AG04449 (cell line): ENCODE measurements at regions of chr16 and their contacts with region 1.

Region 1: GRCh38 chr16:22077700-22078313 is 14.5 kb upstream of the VWA3A start:
- DNase-seq: no peak
- H3K4me3 ChIP-seq: no peak overlapping the region
- CTCF ChIP-seq: peak; percentile 72

Region 2: GRCh38 chr16:20806168-20807050 is 1271.4 kb before region 1 on chr16 and contains the starts of genes ERI2 and REXO5:
- CTCF ChIA-PET with region 1: no interaction called
- POLR2A ChIA-PET with region 1: no interaction called
- DNase-seq: peak; percentile 58
- H3K4me3 ChIP-seq: peak within 1 kb of the TSS; percentile 85
- CTCF ChIP-seq: peak; percentile 70

Region 3: GRCh38 chr16:21952793-21953540 is 124.8 kb before region 1 on chr16 and contains the start of gene UQCRC2:
- CTCF ChIA-PET with region 1: interaction called, 19 read pairs
- POLR2A ChIA-PET with region 1: no interaction called
- DNase-seq: peak; percentile 62
- H3K4me3 ChIP-seq: peak within 1 kb of the TSS; percentile 85
- CTCF ChIP-seq: no peak

Region 4: DNA sequence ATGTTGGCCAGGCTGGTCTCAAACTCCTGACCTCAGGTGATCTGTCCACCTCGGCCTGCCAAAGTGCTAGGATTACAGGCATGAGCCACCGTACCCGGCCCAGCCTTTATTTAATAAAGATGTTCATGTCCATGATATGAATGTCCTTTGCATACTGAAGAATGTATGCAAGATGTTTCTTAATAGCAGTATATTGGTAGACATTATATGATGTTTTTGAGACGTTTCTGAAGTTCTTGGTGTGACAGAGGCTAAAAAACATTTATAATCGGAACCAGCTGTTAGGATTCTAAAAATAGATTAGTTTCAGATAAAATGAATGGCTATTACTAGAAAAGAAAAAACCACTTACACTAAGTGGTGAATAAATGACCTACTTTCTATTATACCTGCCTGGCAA is 88.7 kb before region 1 on chr16:
- CTCF ChIA-PET with region 1: interaction called, 64 read pairs
- POLR2A ChIA-PET with region 1: no interaction called
- DNase-seq: peak; percentile 16
- H3K4me3 ChIP-seq: no peak overlapping the region
- CTCF ChIP-seq: no peak

Region 5: DNA sequence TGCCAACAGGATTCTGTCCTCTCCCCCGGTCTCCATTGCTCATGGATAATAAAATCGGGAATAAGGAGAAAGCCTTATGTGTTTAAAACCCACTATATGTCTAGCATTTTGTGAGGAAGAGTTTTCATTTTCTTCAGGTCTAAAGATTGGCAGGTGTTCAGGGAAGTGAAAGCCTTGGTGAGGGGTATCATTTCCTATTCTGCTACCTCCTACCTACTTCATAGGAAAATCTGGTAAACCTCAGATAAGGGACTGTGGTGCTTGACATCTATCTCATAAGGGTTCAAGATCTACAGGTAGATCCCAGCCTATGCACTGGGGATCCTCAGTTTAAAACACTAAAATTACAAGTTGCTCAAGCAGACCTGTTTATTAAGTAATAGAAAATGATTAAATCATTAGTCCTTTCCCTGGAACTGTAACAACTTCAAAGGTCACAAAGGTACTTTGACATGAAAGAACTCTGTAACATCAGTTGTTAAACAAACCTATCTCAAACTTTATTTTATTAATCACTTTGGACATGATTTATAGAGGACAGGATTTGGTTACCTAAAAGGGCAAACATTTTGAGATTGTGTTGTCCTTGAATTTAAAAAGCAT is 63.4 kb before region 1 on chr16:
- CTCF ChIA-PET with region 1: interaction called, 155 read pairs
- POLR2A ChIA-PET with region 1: interaction called, 3 read pairs
- DNase-seq: no peak
- H3K4me3 ChIP-seq: no peak overlapping the region
- CTCF ChIP-seq: no peak

Region 6: DNA sequence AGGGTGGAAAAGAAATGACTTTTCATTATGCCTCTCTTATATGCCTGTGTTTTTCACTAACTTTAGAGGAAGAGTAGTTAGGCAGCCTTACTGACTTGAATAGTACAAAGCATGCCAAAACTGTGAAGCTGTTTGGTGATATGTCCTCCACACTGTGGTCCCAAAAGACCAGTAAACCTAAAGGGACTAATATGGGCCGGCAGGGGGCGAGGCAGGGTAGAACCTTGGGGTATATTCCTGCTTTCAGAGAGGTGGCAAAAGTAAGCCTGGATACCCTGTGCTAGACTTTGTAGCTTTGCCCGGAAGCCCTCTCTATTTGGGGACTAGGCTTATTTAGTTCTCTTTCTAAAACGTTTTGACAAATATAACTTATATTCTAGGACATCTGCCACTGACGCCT is 21.9 kb before region 1 on chr16:
- CTCF ChIA-PET with region 1: interaction called, 57 read pairs
- POLR2A ChIA-PET with region 1: no interaction called
- DNase-seq: no peak
- H3K4me3 ChIP-seq: no peak overlapping the region
- CTCF ChIP-seq: no peak

Region 7: GRCh38 chr16:22098405-22099255 is 20.8 kb after region 1 on chr16:
- CTCF ChIA-PET with region 1: interaction called, 87 read pairs
- POLR2A ChIA-PET with region 1: no interaction called
- DNase-seq: no peak
- H3K4me3 ChIP-seq: no peak overlapping the region
- CTCF ChIP-seq: peak; percentile 57

Region 8: GRCh38 chr16:22397464-22397863 is 319.7 kb after region 1 on chr16:
- CTCF ChIA-PET with region 1: no interaction called
- POLR2A ChIA-PET with region 1: no interaction called
- DNase-seq: peak; percentile 98
- H3K4me3 ChIP-seq: no peak overlapping the region
- CTCF ChIP-seq: no peak

Region 9: DNA sequence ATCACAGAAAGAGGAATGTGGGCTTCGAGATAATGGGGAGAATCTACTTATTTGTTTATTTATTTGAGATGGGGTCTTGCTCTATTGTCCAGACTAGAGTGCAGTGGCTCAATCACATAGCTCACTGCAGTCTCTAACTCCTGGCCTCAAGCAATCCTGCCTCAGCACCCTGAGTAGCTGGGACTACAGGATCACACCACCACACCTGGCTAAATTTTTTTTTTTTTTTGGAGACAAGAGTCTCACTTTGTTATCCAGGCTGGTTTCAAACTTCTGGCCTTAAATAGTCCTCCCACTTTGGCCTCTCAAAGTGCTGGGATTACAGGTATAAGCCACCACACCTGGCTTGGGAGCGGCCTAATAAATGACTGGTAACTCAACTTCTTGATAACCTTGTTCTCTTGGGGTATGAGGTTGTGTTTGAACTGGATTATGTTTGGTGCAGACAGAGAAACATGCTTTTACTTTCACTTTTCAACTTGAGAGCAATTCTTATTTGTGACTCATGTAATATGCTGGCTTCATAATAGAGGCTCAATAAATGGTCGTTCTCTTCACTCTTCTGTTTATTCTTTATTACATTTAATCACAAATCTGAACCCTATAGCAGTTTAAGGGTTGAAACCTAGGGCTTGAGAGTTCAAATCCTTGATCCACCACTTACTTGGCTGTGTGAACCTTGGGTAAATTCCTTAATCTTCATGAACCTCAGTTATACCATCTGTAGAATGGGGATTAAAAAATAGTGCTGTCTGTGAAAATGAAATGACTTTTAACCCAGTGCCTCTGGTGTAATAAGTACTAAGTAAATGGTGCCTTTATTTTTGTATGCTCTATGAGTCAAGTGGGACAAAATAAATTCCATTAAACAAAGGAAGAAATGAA is 607.0 kb after region 1 on chr16:
- CTCF ChIA-PET with region 1: no interaction called
- POLR2A ChIA-PET with region 1: no interaction called
- DNase-seq: no peak
- H3K4me3 ChIP-seq: no peak overlapping the region
- CTCF ChIP-seq: no peak